Activated CD8-positive, alpha-beta T cell treated with anti-CD3 and anti-CD28 coated beads for 36 hours (primary cell): ENCODE measurements at regions of chr5 and their contacts with region 1.

Region 1: DNA sequence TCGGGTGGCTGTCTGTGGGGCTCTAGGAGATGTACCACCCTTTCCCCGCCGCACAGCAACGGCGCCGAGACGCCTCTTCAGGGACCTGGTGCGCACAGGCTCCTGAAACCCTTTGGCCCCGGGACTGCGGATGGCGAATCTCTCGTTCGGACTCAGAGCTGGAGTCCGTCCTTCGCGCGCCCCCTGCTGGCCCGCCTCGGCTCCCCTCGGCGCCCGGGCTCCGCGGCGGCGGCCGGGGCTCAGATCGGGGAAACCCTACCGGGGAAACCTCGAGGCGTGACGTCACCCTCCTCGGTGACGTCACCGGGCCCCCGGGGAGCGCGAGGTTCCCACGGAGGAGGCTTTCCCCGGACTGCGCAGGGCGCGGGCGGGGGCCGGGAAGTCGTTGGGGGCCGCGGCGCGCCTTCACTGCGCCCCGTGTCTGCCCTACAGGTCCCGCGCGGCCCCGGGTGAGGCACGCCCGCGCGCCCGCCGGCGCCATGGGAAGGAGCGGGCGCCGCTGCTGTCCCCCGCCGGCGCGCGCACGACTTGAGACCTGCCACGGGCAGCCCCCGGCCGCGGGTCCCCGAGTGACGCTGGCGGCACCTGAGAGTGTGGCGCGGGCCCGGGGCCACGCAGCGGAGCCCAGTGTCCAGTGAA is 7.9 kb downstream of the PRR7 start:
- DNase-seq: peak; percentile 94
- ATAC-seq: peak; percentile 41
- H3K4me3 Mint-ChIP-seq: peak overlapping the region; percentile 83
- H3K27ac Mint-ChIP-seq: peak overlapping the region; percentile 80
- H3K4me1 Mint-ChIP-seq: peaks cover 27% of the 10 kb centered on the region
- H3K27me3 Mint-ChIP-seq: no peaks in the 10 kb centered on the region
- CTCF ChIP-seq: peak; percentile 79

Region 2: DNA sequence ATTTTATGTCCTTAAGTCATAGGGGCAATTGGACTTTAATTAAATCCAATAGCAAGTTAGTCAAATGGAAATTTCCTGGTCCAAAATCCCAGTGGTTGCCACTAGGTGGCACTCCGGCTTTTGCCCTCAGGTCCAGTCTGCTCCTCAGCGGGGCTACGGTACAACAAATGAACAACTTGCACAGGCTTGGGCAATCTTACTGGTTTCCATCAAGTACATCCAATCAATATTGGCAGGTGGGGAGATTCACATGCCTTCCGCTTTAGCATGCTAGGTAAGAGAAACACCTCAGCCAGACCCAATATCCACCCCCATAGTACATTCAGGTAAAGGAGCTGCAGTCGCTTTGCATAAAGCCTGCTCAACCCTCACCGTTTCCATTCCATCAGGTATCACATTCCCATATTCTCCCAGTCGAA is 136.5 kb before region 1 on chr5:
- CTCF ChIA-PET with region 1: interaction called, 10 read pairs
- POLR2A ChIA-PET with region 1: interaction called, 4 read pairs
- intact Hi-C with region 1: loop called (anchors 5 kb)
- DNase-seq: peak; percentile 90
- ATAC-seq: peak; percentile 76
- H3K4me3 Mint-ChIP-seq: no peak overlapping the region
- H3K27ac Mint-ChIP-seq: no peak overlapping the region
- H3K4me1 Mint-ChIP-seq: peaks cover 20% of the 10 kb centered on the region
- H3K27me3 Mint-ChIP-seq: no peaks in the 10 kb centered on the region
- CTCF ChIP-seq: peak; percentile 94

Region 3: GRCh38 chr5:177425801-177426565 is 28.5 kb before region 1 on chr5:
- CTCF ChIA-PET with region 1: interaction called, 71 read pairs
- POLR2A ChIA-PET with region 1: interaction called, 606 read pairs
- intact Hi-C with region 1: no loop called
- DNase-seq: peak; percentile 100
- ATAC-seq: peak; percentile 79
- H3K4me3 Mint-ChIP-seq: peak overlapping the region; percentile 88
- H3K27ac Mint-ChIP-seq: peak overlapping the region; percentile 97
- H3K4me1 Mint-ChIP-seq: peaks cover 36% of the 10 kb centered on the region
- H3K27me3 Mint-ChIP-seq: no peaks in the 10 kb centered on the region
- CTCF ChIP-seq: no peak

Region 4: DNA sequence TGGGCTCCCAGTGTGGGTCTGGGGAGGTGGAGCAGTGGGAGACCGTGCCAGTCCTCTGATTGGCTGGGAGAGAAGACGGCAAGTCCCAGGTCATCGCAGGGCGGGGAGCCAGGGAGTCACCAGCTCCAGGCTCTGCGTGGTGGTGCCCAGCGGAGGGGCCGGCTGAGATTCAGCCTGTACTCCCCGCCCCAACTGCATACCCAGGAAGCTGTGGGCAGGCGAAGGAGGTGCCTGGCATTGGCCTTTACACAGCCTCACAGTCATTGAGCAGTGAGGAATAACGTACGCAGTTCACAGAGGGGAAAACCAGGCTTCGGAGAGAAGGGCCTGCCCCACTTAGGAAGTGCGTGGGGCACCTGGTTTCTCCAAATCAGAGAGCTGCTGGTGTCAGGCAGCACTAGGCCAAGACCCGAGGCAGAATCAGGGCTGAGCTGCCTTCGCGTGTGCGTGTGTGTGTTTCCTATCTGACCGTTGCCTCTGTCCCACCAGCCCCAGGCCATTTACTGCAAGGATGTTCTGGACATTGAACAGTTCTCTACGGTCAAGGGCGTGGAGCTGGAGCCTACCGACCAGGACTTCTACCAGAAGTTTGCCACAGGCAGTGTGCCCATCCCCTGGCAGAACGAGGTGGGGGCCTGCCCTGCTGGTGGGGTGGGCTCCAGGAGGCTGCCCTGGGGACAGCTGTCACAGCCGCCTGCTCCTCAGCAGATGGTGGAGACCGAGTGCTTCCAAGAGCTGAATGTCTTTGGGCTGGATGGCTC is 14.1 kb before region 1 on chr5:
- CTCF ChIA-PET with region 1: interaction called, 102 read pairs
- POLR2A ChIA-PET with region 1: interaction called, 98 read pairs
- intact Hi-C with region 1: no loop called
- DNase-seq: peak; percentile 71
- ATAC-seq: peak; percentile 72
- H3K4me3 Mint-ChIP-seq: peak overlapping the region; percentile 10
- H3K27ac Mint-ChIP-seq: peak overlapping the region; percentile 87
- H3K4me1 Mint-ChIP-seq: peaks cover 57% of the 10 kb centered on the region
- H3K27me3 Mint-ChIP-seq: no peaks in the 10 kb centered on the region
- CTCF ChIP-seq: no peak

Region 5: GRCh38 chr5:177478711-177479646 is 24.5 kb after region 1 on chr5:
- CTCF ChIA-PET with region 1: interaction called, 48 read pairs
- POLR2A ChIA-PET with region 1: interaction called, 294 read pairs
- intact Hi-C with region 1: no loop called
- DNase-seq: peak; percentile 80
- ATAC-seq: peak; percentile 76
- H3K4me3 Mint-ChIP-seq: peak overlapping the region; percentile 32
- H3K27ac Mint-ChIP-seq: peak overlapping the region; percentile 98
- H3K4me1 Mint-ChIP-seq: peaks cover 52% of the 10 kb centered on the region
- H3K27me3 Mint-ChIP-seq: no peaks in the 10 kb centered on the region
- CTCF ChIP-seq: no peak